Panc1 (cell line): ENCODE measurements at regions of chr9 and their contacts with region 1.

Region 1: GRCh38 chr9:75181748-75182147 is 93.4 kb downstream of the OSTF1 start:
- DNase-seq: peak; percentile 7
- ATAC-seq: peak; percentile 58; the same call in 1 of the 2 replicates
- H3K4me3 ChIP-seq: no peak overlapping the region
- H3K27ac ChIP-seq: no peak overlapping the region
- H3K4me1 ChIP-seq: no peaks in the 10 kb centered on the region
- H3K27me3 ChIP-seq: no peaks in the 10 kb centered on the region
- CTCF ChIP-seq: no peak

Region 2: DNA sequence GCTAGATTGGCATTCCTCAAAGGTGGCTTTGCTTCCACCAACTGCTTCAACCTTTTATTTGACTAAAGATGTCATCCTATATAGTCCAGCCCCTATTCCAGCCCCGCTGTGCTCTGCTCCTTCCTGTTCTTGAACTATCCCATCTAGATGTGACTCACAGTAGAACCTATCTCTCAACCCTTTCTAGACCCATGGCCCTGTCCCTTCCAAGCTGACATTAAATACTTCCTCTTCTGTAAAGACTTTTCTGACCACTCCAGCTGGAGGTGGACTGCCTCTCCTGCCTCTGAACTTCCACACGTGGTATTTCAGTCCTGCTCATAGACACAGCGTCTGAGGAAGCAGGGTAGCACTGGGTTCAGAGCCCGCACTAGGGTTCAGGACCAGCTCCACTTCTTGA is 61.1 kb before region 1 on chr9:
- CTCF ChIA-PET with region 1: no interaction called
- POLR2A ChIA-PET with region 1: no interaction called
- in situ Hi-C with region 1: no loop called
- intact Hi-C with region 1: no loop called
- DNase-seq: no peak
- ATAC-seq: no peak
- H3K4me3 ChIP-seq: no peak overlapping the region
- H3K27ac ChIP-seq: no peak overlapping the region
- H3K4me1 ChIP-seq: no peaks in the 10 kb centered on the region
- H3K27me3 ChIP-seq: no peaks in the 10 kb centered on the region
- CTCF ChIP-seq: no peak

Region 3: GRCh38 chr9:76512826-76513225 is 1331.1 kb after region 1 on chr9:
- CTCF ChIA-PET with region 1: no interaction called
- POLR2A ChIA-PET with region 1: no interaction called
- in situ Hi-C with region 1: no loop called
- intact Hi-C with region 1: loop called (anchors 5 kb)
- DNase-seq: no peak
- ATAC-seq: no peak
- H3K4me3 ChIP-seq: no peak overlapping the region
- H3K27ac ChIP-seq: no peak overlapping the region
- H3K4me1 ChIP-seq: no peaks in the 10 kb centered on the region
- H3K27me3 ChIP-seq: no peaks in the 10 kb centered on the region
- CTCF ChIP-seq: no peak